Ascending aorta (tissue), 2 donors: ENCODE measurements at regions of chr2 and their contacts with region 1.

Region 1: GRCh38 chr2:20611077-20611843 is 39.6 kb downstream of the HS1BP3 start:
- DNase-seq: peak; percentile 64 to 93
- H3K4me3 ChIP-seq: no peak overlapping the region
- H3K27ac ChIP-seq: peak overlapping the region; percentile 77 to 79
- H3K4me1 ChIP-seq: peaks cover 25 to 35% of the 10 kb centered on the region in 2 donors
- H3K27me3 ChIP-seq: no peaks in the 10 kb centered on the region
- CTCF ChIP-seq: no peak

Region 2: GRCh38 chr2:20595431-20596192 is 15.6 kb before region 1 on chr2:
- intact Hi-C with region 1: loop called (anchors 2 kb)
- DNase-seq: peak; percentile 22 to 69
- H3K4me3 ChIP-seq: no peak overlapping the region
- H3K27ac ChIP-seq: peak overlapping the region; percentile 73 to 87
- H3K4me1 ChIP-seq: peaks cover 20 to 43% of the 10 kb centered on the region in 2 donors
- H3K27me3 ChIP-seq: no peaks in the 10 kb centered on the region
- CTCF ChIP-seq: no peak

Region 3: DNA sequence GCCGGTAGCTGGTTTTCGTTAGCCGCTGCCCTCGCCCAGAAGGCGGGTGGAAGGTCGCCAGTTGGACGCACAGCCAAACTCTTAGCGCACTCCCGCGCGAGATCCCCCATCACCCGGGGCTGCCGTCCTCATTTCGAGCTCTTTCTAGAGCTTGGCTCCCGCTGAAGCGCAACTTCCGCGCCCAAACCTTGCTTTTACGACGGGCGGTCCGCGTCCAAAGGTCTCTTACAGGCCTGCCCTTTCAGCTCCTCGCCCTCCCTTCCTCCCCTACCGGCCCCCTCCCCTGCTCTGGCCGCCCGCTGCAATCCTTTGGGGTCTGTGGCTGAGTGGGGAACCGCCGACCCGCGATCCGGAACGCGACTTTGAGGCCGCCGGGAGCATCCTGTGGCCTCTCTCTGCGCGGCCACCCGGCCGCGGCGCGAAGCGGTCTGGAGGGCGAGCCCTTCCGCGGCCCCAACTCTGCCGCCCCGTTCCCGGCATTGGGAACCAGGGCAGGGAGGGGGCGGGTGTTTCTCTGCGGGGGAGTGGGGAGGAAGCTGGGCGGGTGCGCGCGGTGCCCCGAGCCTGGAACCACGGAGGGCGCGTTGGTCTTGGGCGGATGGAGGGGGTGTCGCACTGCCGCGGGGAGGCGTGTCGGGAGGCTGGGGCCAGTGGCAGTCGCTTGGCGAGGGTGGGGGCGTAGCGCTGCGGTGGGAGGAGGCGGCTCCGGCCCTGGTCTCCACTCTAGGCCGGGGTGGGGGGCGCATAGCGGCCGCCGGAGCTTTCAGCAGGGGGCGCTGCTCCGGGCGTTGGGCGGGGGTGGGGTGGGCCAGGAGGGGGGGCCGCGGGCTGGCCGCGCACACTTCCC is 55.3 kb after region 1 on chr2 and contains the start of gene GDF7:
- intact Hi-C with region 1: no loop called
- DNase-seq: peak; percentile 69 to 94
- H3K4me3 ChIP-seq: peak within 1 kb of the TSS; percentile 63 to 72
- H3K27ac ChIP-seq: peak within 1 kb of the TSS; percentile 95 to 96
- H3K4me1 ChIP-seq: peaks cover 3 to 20% of the 10 kb centered on the region in 2 donors
- H3K27me3 ChIP-seq: no peaks in the 10 kb centered on the region
- CTCF ChIP-seq: peak in 2 of 3 experiments; percentile 53 to 71
- total RNA-seq, gene GDF7: 11.6 TPM

Region 4: GRCh38 chr2:21438949-21439348 is 827.7 kb after region 1 on chr2:
- intact Hi-C with region 1: no loop called
- DNase-seq: no peak
- H3K4me3 ChIP-seq: no peak overlapping the region
- H3K27ac ChIP-seq: no peak overlapping the region
- H3K4me1 ChIP-seq: no peaks in the 10 kb centered on the region
- H3K27me3 ChIP-seq: no peaks in the 10 kb centered on the region
- CTCF ChIP-seq: no peak